Transverse colon (tissue), 4 donors: ENCODE measurements at regions of chr9 and their contacts with region 1.

Region 1: DNA sequence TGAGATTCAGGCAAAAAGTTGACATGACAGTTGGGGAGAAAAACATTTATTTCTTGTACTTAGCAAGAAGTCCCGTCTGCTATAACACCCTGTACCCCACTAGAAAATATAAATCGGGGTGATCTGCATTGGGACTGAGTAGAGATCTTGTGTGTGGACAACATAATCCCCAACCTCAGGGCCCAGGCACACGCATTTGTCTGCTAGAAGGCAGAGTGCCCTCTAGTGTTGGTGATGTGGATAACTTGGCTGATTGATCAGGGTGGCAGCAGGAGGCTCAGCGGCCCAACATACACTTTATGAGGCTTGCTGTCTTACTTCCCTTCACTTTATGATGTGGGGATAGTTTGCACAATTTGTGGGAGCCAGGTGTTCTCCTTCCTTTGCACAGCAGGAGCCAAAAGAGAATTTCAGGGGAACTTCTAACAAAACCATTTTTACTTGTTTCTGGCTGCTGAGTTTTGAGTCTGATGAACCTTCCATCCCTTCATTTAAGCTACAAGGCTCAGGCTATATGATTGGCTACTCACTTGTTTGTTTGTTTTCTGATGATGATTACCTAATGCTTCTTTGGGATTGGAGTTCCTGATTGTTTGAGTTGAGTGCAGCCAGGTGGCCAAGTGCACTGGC is 263.2 kb downstream of the DMAC1 start:
- DNase-seq: peak; percentile 57
- H3K4me3 ChIP-seq: no peak overlapping the region
- H3K27ac ChIP-seq: no peak overlapping the region
- H3K4me1 ChIP-seq: no peaks in the 10 kb centered on the region
- H3K27me3 ChIP-seq: no peaks in the 10 kb centered on the region
- CTCF ChIP-seq: peak; percentile 54 to 65 (median 60)
- EP300 ChIP-seq: no peak
- POLR2A ChIP-seq: no peak

Region 2: DNA sequence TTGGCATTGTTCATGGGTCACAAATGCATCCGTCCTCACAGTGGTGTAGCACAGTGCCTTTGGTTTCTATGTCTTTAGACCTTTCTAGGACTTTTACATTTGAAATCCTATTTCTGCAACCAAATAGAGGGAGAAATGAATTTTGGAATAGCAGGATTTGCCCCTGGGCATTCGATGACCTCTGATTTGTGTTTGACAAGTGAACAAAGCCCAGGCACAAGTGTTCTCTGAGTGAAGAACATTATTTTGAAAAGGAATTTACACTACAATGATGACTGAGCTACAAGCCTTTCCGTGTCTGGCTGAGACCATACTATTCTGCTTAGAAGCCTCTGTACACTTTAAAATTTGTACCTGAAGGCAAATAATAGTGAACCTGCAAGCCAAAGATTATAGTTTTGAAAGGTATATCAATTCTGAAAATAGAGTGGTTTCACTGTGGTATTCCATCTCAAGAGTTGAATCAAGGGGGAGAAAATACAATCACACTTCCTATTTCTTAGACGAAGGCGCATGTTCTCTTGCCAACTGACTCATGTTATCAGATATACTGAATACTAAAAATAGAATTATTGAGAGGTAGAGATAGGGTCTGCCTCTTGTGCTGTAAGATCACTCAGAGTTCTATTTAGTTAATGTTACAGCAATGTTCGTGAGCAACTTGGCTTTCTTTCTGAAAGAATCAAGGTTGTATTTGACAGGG is 481.1 kb before region 1 on chr9:
- in situ Hi-C with region 1: loop called in 2 of 4 experiments (anchors 25 kb)
- intact Hi-C with region 1: no loop called
- DNase-seq: no peak
- H3K4me3 ChIP-seq: no peak overlapping the region
- H3K27ac ChIP-seq: no peak overlapping the region
- H3K4me1 ChIP-seq: no peaks in the 10 kb centered on the region
- H3K27me3 ChIP-seq: no peaks in the 10 kb centered on the region
- CTCF ChIP-seq: no peak
- EP300 ChIP-seq: no peak
- POLR2A ChIP-seq: no peak

Region 3: GRCh38 chr9:7094052-7094451 is 442.4 kb before region 1 on chr9:
- in situ Hi-C with region 1: loop called in 2 of 4 experiments (anchors 25 kb)
- intact Hi-C with region 1: no loop called
- DNase-seq: no peak
- H3K4me3 ChIP-seq: no peak overlapping the region
- H3K27ac ChIP-seq: no peak overlapping the region
- H3K4me1 ChIP-seq: no peaks in the 10 kb centered on the region
- H3K27me3 ChIP-seq: no peaks in the 10 kb centered on the region
- CTCF ChIP-seq: peak in 4 of 5 experiments; percentile 36 to 62 (median 51)
- EP300 ChIP-seq: no peak
- POLR2A ChIP-seq: no peak

Region 4: DNA sequence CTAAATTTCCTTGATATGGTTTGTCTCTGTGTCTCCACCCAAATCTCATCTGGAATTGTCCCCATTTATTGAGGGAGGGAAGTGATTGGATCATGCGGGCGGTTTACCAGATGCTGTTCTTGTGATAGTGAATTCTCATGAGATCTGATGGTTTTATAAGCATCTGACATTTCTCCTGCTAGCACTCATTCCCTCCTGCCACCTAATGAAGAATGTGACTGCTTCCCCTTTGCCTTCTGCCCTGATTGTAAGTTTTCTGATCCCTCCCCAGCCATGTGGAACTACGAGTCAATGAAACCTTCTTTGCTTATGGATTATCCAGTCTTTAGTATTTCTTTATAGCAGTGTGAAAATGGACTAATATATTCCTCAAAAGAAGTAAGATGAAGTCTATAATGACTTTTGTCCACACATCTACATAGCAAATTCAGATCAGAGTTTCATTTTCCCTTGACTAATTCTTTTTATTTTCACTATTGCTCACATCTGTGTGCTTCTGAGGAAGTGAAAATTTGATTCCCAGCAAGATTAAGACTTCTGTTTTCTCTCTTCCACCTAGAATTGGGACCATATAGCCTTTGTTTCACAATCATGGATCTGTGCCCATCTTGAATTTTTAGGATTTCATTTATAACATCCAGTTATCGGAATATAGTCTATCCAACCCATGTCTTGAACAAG is 130.4 kb before region 1 on chr9:
- in situ Hi-C with region 1: loop called in 2 of 4 experiments (anchors 10 kb)
- intact Hi-C with region 1: no loop called
- DNase-seq: no peak
- H3K4me3 ChIP-seq: no peak overlapping the region
- H3K27ac ChIP-seq: no peak overlapping the region
- H3K4me1 ChIP-seq: no peaks in the 10 kb centered on the region
- H3K27me3 ChIP-seq: no peaks in the 10 kb centered on the region
- CTCF ChIP-seq: no peak
- EP300 ChIP-seq: no peak
- POLR2A ChIP-seq: no peak